Natural killer cell (primary cell): ENCODE measurements at regions of chrX and their contacts with region 1.

Region 1: GRCh38 chrX:51336584-51336983 is 4.0 kb downstream of the NUDT10 start:
- DNase-seq: peak in 1 of 2 donors; percentile 57
- ATAC-seq: peak; percentile 48 to 72 (median 52)
- H3K4me3 ChIP-seq: no peak overlapping the region
- H3K4me3 Mint-ChIP-seq: no peak overlapping the region
- H3K27ac ChIP-seq: no peak overlapping the region
- H3K27ac Mint-ChIP-seq: no peak overlapping the region
- H3K4me1 ChIP-seq: no peaks in the 10 kb centered on the region
- H3K4me1 Mint-ChIP-seq: no peaks in the 10 kb centered on the region
- H3K27me3 ChIP-seq: no peaks in the 10 kb centered on the region
- H3K27me3 Mint-ChIP-seq: no peaks in the 10 kb centered on the region
- CTCF ChIP-seq: peak; percentile 39

Region 2: DNA sequence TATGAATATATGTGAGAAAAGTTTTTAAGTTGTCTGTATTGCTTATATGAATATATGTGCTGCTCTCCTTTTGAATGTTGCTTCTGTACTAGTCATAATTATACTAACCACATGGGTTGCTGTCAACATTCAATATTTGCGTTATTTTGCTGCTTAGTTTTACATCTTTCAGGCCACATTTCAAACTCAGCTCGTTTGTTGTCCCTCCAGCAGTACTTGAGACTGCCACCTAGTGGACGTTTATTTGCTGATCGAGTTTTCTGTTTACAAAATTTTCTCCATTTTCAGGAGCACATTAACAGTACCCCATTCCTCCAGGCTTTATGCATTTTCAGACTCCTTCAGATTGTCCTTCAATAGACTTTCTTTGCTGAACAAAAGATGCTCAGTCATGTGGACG is 84.0 kb after region 1 on chrX:
- intact Hi-C with region 1: loop called (anchors 2 kb)
- DNase-seq: peak in 1 of 2 donors; percentile 71
- ATAC-seq: peak in 1 of 3 donors; percentile 48
- H3K4me3 ChIP-seq: no peak overlapping the region
- H3K4me3 Mint-ChIP-seq: no peak overlapping the region
- H3K27ac ChIP-seq: no peak overlapping the region
- H3K27ac Mint-ChIP-seq: no peak overlapping the region
- H3K4me1 ChIP-seq: no peaks in the 10 kb centered on the region
- H3K4me1 Mint-ChIP-seq: no peaks in the 10 kb centered on the region
- H3K27me3 ChIP-seq: no peaks in the 10 kb centered on the region
- H3K27me3 Mint-ChIP-seq: peaks cover 0 to 29% of the 10 kb centered on the region in 2 donors
- CTCF ChIP-seq: peak; percentile 54

Region 3: GRCh38 chrX:51461053-51462044 is 124.8 kb after region 1 on chrX:
- intact Hi-C with region 1: loop called (anchors 1 kb)
- DNase-seq: peak in 1 of 2 donors; percentile 67
- ATAC-seq: peak in 1 of 3 donors; percentile 69
- H3K4me3 ChIP-seq: no peak overlapping the region
- H3K4me3 Mint-ChIP-seq: no peak overlapping the region
- H3K27ac ChIP-seq: no peak overlapping the region
- H3K27ac Mint-ChIP-seq: no peak overlapping the region
- H3K4me1 ChIP-seq: no peaks in the 10 kb centered on the region
- H3K4me1 Mint-ChIP-seq: no peaks in the 10 kb centered on the region
- H3K27me3 ChIP-seq: no peaks in the 10 kb centered on the region
- H3K27me3 Mint-ChIP-seq: peaks cover 5 to 34% of the 10 kb centered on the region in 2 donors
- CTCF ChIP-seq: peak; percentile 73